Activated naive CD8-positive, alpha-beta T cell treated with anti-CD3 and anti-CD28 coated beads, Interleukin-2, amount 10 ng/mL, durations not matched to agents 7 days and 5 days (primary cell): ENCODE measurements at regions of chr20 and their contacts with region 1.

Region 1: GRCh38 chr20:33666293-33667244 is at the start of gene ACTL10:
- DNase-seq: peak; percentile 84
- ATAC-seq: peak; percentile 51
- H3K4me3 Mint-ChIP-seq: peak within 1 kb of the TSS; percentile 92
- H3K27ac Mint-ChIP-seq: peak within 1 kb of the TSS; percentile 93
- H3K4me1 Mint-ChIP-seq: peaks cover 28% of the 10 kb centered on the region
- H3K27me3 Mint-ChIP-seq: no peaks in the 10 kb centered on the region
- total RNA-seq, gene ACTL10: 4.4 to 4.9 TPM

Region 2: GRCh38 chr20:33443512-33444239 is 222.9 kb before region 1 on chr20 and contains the start of gene SNTA1:
- POLR2A ChIA-PET with region 1: interaction called, 13 read pairs
- DNase-seq: peak; percentile 90
- ATAC-seq: peak; percentile 89
- H3K4me3 Mint-ChIP-seq: peak within 1 kb of the TSS; percentile 91
- H3K27ac Mint-ChIP-seq: peak within 1 kb of the TSS; percentile 92
- H3K4me1 Mint-ChIP-seq: peaks cover 21% of the 10 kb centered on the region
- H3K27me3 Mint-ChIP-seq: peaks cover 7% of the 10 kb centered on the region
- total RNA-seq, gene SNTA1: 10.1 to 10.6 TPM

Region 3: GRCh38 chr20:33489495-33490022 is 177.0 kb before region 1 on chr20:
- POLR2A ChIA-PET with region 1: interaction called, 21 read pairs
- DNase-seq: peak; percentile 99
- ATAC-seq: peak; percentile 94
- H3K4me3 Mint-ChIP-seq: peak overlapping the region; percentile 89
- H3K27ac Mint-ChIP-seq: peak overlapping the region; percentile 91
- H3K4me1 Mint-ChIP-seq: peaks cover 5% of the 10 kb centered on the region
- H3K27me3 Mint-ChIP-seq: no peaks in the 10 kb centered on the region

Region 4: GRCh38 chr20:33679758-33680485 is 13.4 kb after region 1 on chr20:
- POLR2A ChIA-PET with region 1: interaction called, 116 read pairs
- DNase-seq: peak; percentile 70
- ATAC-seq: peak; percentile 74
- H3K4me3 Mint-ChIP-seq: peak overlapping the region; percentile 41
- H3K27ac Mint-ChIP-seq: peak overlapping the region; percentile 81
- H3K4me1 Mint-ChIP-seq: peaks cover 61% of the 10 kb centered on the region
- H3K27me3 Mint-ChIP-seq: no peaks in the 10 kb centered on the region

Region 5: GRCh38 chr20:33686100-33686983 is 19.8 kb after region 1 on chr20 and contains the start of gene E2F1:
- POLR2A ChIA-PET with region 1: interaction called, 116 read pairs
- DNase-seq: peak; percentile 99
- ATAC-seq: peak; percentile 85
- H3K4me3 Mint-ChIP-seq: peak within 1 kb of the TSS; percentile 93
- H3K27ac Mint-ChIP-seq: peak within 1 kb of the TSS; percentile 90
- H3K4me1 Mint-ChIP-seq: peaks cover 70% of the 10 kb centered on the region
- H3K27me3 Mint-ChIP-seq: no peaks in the 10 kb centered on the region
- total RNA-seq, gene E2F1: 62.5 to 68.4 TPM

Region 6: DNA sequence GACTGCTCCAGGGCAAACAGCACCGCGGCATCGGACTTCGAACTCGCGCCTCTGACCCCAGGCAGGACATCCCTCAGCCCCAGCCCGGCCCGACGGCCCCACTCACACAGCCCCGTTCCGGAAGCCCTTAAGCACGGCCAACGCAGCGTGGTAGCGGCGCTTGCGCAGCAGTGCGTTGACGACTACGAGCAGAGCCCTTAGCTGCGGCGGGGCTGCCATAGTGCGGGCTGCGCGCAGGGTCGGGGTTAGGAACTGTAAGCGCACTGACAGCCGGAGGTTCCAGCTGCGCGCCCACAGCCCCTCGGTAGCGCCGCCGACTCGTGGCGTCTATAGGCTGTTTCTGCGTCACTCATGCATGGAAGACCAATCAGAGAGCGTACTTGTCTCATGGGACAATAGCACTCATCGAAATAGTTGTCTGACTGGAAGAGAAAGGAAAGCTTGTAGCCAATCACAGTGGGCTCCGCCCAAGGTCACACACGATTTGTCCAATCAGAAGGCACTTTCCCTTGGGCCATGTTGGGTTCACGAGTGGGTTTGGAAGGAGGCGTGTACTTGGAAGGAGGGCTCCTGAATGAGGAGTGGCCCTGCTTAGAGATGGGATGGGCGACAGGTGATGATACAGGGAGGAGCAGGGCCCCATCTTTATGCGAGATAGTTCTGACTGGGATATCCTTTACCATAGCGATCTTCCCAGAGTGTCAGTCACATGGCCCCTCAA is 53.6 kb after region 1 on chr20 and contains the start of gene PXMP4:
- POLR2A ChIA-PET with region 1: interaction called, 22 read pairs
- DNase-seq: peak; percentile 86
- ATAC-seq: peak; percentile 98
- H3K4me3 Mint-ChIP-seq: peak within 1 kb of the TSS; percentile 90
- H3K27ac Mint-ChIP-seq: peak within 1 kb of the TSS; percentile 91
- H3K4me1 Mint-ChIP-seq: peaks cover 24% of the 10 kb centered on the region
- H3K27me3 Mint-ChIP-seq: no peaks in the 10 kb centered on the region
- total RNA-seq, gene PXMP4: 13.4 to 19.2 TPM

Region 7: GRCh38 chr20:33731693-33732165 is 65.2 kb after region 1 on chr20 and contains the start of gene ZNF341:
- POLR2A ChIA-PET with region 1: interaction called, 21 read pairs
- DNase-seq: no peak
- ATAC-seq: peak; percentile 86
- H3K4me3 Mint-ChIP-seq: peak within 1 kb of the TSS; percentile 87
- H3K27ac Mint-ChIP-seq: peak within 1 kb of the TSS; percentile 90
- H3K4me1 Mint-ChIP-seq: peaks cover 18% of the 10 kb centered on the region
- H3K27me3 Mint-ChIP-seq: no peaks in the 10 kb centered on the region
- total RNA-seq, gene ZNF341: 5.1 to 5.7 TPM

Region 8: DNA sequence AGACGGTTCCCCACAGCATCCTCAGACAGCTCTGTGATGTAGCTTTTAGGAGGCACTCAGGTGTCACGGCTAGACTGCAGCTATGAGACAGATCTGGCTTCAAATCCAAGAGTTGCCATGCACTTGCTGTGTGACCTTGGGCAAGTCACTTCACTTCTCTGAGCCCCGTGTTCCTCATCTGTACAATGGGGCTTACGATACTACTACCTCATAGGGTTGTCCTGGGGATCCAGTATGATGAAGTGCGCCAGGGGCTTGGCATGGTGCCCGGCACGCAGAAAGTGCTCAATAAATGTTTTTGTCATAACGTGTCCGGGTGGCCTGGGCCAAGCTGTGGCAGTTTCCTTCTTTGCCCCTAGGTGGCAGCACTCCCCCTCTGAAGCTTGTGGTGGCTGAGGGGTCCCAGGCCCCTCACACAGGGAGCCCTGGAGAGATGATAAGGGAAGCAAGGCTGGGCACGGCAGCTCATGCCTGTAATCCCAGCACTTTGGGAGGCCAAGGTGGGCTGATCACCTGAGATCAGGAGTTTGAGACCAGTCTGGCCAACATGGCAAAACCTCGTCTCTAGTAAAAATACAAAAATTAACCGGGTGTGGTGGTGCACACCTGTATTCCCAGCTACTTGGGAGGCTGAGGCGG is 125.5 kb after region 1 on chr20:
- POLR2A ChIA-PET with region 1: no interaction called
- DNase-seq: peak; percentile 69
- ATAC-seq: no peak
- H3K4me3 Mint-ChIP-seq: no peak overlapping the region
- H3K27ac Mint-ChIP-seq: peak overlapping the region; percentile 8
- H3K4me1 Mint-ChIP-seq: peaks cover 12% of the 10 kb centered on the region
- H3K27me3 Mint-ChIP-seq: no peaks in the 10 kb centered on the region